CD8-positive, alpha-beta T cell (primary cell): ENCODE measurements at regions of chr17 and their contacts with region 1.

Region 1: DNA sequence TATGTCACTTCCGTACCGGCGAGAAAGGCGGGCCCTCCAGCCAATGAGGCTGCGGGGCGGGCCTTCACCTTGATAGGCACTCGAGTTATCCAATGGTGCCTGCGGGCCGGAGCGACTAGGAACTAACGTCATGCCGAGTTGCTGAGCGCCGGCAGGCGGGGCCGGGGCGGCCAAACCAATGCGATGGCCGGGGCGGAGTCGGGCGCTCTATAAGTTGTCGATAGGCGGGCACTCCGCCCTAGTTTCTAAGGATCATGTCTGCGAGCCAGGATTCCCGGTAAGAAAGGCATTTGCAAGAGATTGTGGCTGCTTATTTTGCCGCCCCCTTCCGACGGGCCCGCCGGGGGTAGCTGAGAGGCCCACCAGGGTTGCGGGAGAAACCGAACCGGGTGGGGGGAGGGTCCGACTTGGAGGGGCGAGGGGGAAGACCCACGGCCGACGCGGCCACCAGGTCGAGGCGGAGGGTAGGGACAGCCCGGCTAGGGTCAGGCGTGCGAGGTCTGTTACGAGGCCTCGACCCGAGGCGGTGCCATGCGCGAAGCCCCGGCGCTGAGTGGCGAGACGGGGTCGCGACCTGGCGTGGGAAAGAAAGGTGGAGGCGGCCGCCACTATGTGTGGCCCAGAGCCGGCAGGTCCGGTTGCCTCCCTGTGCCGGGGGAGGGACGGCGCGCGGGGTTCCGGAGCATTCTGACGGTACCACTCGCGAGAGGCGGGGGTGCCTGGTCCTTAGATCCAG is 6.7 kb upstream of the CD68 start:
- DNase-seq: peak in 8 of 9 experiments; percentile 99 to 100 (median 100)
- ATAC-seq: peak; percentile 83
- H3K4me3 ChIP-seq: peak overlapping the region; percentile 97 to 100
- H3K4me3 Mint-ChIP-seq: peak overlapping the region; percentile 99
- H3K27ac ChIP-seq: peak overlapping the region; percentile 98 to 99
- H3K27ac Mint-ChIP-seq: peak overlapping the region; percentile 96
- H3K4me1 ChIP-seq: peaks cover 28% of the 10 kb centered on the region
- H3K4me1 Mint-ChIP-seq: peaks cover 48% of the 10 kb centered on the region
- H3K27me3 ChIP-seq: no peaks in the 10 kb centered on the region
- H3K27me3 Mint-ChIP-seq: no peaks in the 10 kb centered on the region
- CTCF ChIP-seq: no peak

Region 2: GRCh38 chr17:7214300-7215135 is 358.2 kb before region 1 on chr17:
- CTCF ChIA-PET with region 1: no interaction called
- POLR2A ChIA-PET with region 1: no interaction called
- intact Hi-C with region 1: loop called in 1 of 2 experiments (anchors 2 kb)
- DNase-seq: peak; percentile 97 to 100 (median 98)
- ATAC-seq: peak; percentile 75
- H3K4me3 ChIP-seq: peak overlapping the region; percentile 36 to 56
- H3K4me3 Mint-ChIP-seq: peak overlapping the region; percentile 90
- H3K27ac ChIP-seq: peak overlapping the region; percentile 80 to 95
- H3K27ac Mint-ChIP-seq: peak overlapping the region; percentile 95
- H3K4me1 ChIP-seq: peaks cover 51% of the 10 kb centered on the region
- H3K4me1 Mint-ChIP-seq: peaks cover 61% of the 10 kb centered on the region
- H3K27me3 ChIP-seq: no peaks in the 10 kb centered on the region
- H3K27me3 Mint-ChIP-seq: no peaks in the 10 kb centered on the region
- CTCF ChIP-seq: peak; percentile 52

Region 3: GRCh38 chr17:7314719-7315569 is 257.8 kb before region 1 on chr17 and contains the start of gene GPS2:
- CTCF ChIA-PET with region 1: no interaction called
- POLR2A ChIA-PET with region 1: no interaction called
- intact Hi-C with region 1: loop called in 1 of 2 experiments (anchors 2 kb)
- DNase-seq: peak; percentile 87 to 97 (median 94)
- ATAC-seq: peak; percentile 78
- H3K4me3 ChIP-seq: peak within 1 kb of the TSS; percentile 77 to 82
- H3K4me3 Mint-ChIP-seq: peak within 1 kb of the TSS; percentile 92
- H3K27ac ChIP-seq: peak within 1 kb of the TSS; percentile 81 to 97
- H3K27ac Mint-ChIP-seq: peak within 1 kb of the TSS; percentile 96
- H3K4me1 ChIP-seq: peaks cover 50% of the 10 kb centered on the region
- H3K4me1 Mint-ChIP-seq: peaks cover 51% of the 10 kb centered on the region
- H3K27me3 ChIP-seq: no peaks in the 10 kb centered on the region
- H3K27me3 Mint-ChIP-seq: no peaks in the 10 kb centered on the region
- CTCF ChIP-seq: no peak
- total RNA-seq, gene GPS2: 128 to 132 TPM

Region 4: DNA sequence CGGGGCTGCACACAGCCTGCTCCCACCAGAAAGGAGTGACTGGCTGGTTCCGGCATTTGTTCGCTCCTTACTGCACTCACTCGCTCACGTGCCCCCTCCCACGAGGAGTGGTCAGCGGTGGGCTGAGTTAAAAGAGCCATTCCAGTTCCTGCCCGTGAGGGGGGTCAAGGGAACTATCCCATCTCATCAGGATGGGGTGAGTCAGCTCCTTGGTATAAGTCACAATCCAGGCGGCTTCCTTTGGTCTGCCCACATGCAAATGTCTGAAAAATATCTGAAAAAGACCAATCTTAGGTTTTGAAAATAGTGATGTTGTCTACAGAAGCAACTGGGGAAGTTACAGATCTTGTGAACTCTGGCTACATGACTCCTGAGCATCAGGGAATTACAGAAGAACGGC is 33.9 kb before region 1 on chr17:
- CTCF ChIA-PET with region 1: no interaction called
- POLR2A ChIA-PET with region 1: no interaction called
- intact Hi-C with region 1: no loop called
- DNase-seq: no peak
- ATAC-seq: no peak
- H3K4me3 ChIP-seq: no peak overlapping the region
- H3K4me3 Mint-ChIP-seq: no peak overlapping the region
- H3K27ac ChIP-seq: no peak overlapping the region
- H3K27ac Mint-ChIP-seq: no peak overlapping the region
- H3K4me1 ChIP-seq: no peaks in the 10 kb centered on the region
- H3K4me1 Mint-ChIP-seq: no peaks in the 10 kb centered on the region
- H3K27me3 ChIP-seq: peaks cover 0 to 2% of the 10 kb centered on the region in 2 experiments
- H3K27me3 Mint-ChIP-seq: peaks cover 3% of the 10 kb centered on the region
- CTCF ChIP-seq: no peak

Region 5: DNA sequence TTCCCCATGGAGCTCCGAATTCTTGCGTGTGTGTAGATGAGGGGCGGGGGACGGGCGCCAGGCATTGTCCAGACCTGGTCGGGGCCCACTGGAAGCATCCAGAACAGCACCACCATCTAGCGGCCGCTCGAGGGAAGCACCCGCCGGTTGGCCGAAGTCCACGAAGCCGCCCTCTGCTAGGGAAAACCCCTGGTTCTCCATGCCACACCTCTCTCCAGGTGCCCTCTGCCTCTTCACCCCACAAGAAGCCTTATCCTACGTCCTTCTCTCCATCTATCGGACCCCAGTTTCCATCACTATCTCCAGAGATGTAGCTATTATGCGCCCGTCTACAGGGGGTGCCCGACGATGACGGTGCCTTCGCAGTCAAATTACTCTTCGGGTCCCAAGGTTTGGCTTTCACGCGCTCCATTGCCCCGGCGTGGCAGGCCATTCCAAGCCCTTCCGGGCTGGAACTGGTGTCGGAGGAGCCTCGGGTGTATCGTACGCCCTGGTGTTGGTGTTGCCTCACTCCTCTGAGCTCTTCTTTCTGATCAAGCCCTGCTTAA is 11.7 kb before region 1 on chr17:
- CTCF ChIA-PET with region 1: interaction called, 30 read pairs
- POLR2A ChIA-PET with region 1: interaction called, 18 read pairs
- intact Hi-C with region 1: loop called (anchors 1 kb)
- DNase-seq: peak; percentile 67 to 89 (median 81)
- ATAC-seq: peak; percentile 68
- H3K4me3 ChIP-seq: peak overlapping the region; percentile 50 to 95
- H3K4me3 Mint-ChIP-seq: peak overlapping the region; percentile 94
- H3K27ac ChIP-seq: peak overlapping the region; percentile 91 to 97
- H3K27ac Mint-ChIP-seq: peak overlapping the region; percentile 99
- H3K4me1 ChIP-seq: peaks cover 49% of the 10 kb centered on the region
- H3K4me1 Mint-ChIP-seq: peaks cover 50% of the 10 kb centered on the region
- H3K27me3 ChIP-seq: no peaks in the 10 kb centered on the region
- H3K27me3 Mint-ChIP-seq: no peaks in the 10 kb centered on the region
- CTCF ChIP-seq: peak; percentile 85

Region 6: DNA sequence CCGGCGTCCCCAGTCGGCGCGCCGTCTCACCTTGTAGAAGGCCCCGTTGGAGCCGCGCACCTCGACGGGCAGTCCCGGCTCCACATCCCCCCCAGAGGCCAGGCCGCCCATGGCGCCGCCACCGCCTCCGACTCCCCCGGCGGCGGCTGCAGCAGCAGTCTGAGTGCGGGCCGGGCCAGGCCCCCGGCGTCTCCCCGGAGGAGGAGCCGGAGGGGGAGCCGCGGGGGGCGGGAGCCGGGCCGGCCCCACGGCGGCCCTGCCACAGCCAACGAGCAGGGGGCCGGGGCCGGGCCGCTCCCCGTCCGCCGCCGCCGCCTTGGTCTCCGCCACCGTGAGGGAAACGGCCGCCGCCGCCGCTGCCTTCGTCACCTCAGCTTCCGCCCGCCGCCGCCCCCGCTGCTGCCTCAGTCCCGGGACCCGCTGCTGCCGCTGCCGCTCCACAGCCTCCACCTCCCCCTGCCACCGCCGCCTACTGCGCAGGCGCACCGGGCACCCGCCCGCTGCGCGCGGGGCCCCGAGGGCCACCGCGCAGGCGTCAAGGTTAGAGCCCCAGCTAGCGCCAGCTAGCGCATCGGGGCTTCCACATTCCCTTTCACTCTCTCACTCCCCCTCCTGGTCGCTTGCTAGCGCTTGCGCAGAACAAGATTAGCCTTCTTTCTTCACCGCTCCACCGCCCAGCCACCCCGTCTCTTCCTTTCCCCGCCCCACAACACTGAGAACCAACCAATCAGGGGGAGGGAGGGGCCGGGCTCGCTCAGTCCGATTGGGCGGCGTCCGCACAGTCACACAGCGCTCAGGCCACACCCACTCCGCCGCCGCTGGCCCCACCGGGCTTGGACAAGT is 41.9 kb after region 1 on chr17 and contains the start of gene FXR2:
- CTCF ChIA-PET with region 1: interaction called, 4 read pairs
- POLR2A ChIA-PET with region 1: interaction called, 6 read pairs
- intact Hi-C with region 1: loop called (anchors 1 kb)
- DNase-seq: peak; percentile 96 to 100 (median 98)
- ATAC-seq: peak; percentile 87
- H3K4me3 ChIP-seq: peak within 1 kb of the TSS; percentile 78 to 86
- H3K4me3 Mint-ChIP-seq: peak within 1 kb of the TSS; percentile 89
- H3K27ac ChIP-seq: peak within 1 kb of the TSS; percentile 70 to 89
- H3K27ac Mint-ChIP-seq: peak within 1 kb of the TSS; percentile 96
- H3K4me1 ChIP-seq: peaks cover 30% of the 10 kb centered on the region
- H3K4me1 Mint-ChIP-seq: peaks cover 38% of the 10 kb centered on the region
- H3K27me3 ChIP-seq: no peaks in the 10 kb centered on the region
- H3K27me3 Mint-ChIP-seq: no peaks in the 10 kb centered on the region
- CTCF ChIP-seq: peak; percentile 39
- total RNA-seq, gene FXR2: 18.8 to 21.7 TPM

Region 7: DNA sequence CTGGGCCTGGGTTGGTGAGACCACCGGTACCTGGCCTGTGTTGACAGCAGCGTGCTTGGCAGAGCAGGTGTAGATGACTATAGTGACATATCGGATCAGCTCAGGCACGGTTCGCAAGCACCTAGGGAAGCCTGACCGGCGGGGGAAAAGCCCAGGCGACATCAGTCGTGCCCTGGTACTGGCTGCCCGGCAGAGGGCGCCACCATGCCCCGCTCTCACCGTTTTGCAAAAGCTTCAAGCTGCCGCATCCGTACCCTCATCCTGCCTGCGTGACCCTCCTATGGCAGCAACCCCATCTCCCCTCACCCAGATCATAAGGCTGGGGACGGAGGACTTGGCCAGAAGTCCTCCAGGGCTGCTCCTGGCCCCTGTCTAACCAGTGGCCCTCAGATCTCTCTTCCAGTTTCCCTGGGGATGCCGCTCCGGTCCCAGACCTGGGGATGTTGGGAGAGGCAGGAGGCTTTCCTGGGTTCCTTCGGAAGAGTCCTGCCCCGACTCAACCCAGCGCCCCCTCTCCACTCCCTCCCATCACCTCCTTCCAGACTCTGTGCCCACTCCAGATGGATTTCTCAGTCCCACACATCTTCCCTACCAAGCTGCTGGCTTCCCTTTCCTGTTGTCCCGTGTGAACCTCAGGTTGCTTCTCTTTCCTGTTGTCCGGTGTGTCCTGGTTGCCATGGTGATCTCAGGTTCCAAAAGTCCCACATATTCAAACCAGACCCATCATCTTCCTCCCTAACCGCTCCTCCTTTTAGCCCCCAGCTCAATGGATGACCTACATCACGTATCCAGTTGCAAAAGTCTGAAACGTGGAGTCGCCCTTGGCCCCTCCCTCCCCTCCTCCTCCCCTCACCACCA is 501.1 kb after region 1 on chr17:
- CTCF ChIA-PET with region 1: no interaction called
- POLR2A ChIA-PET with region 1: no interaction called
- intact Hi-C with region 1: no loop called
- DNase-seq: peak; percentile 74 to 93 (median 88)
- ATAC-seq: peak; percentile 96
- H3K4me3 ChIP-seq: peak overlapping the region in 1 of 2 experiments; percentile 45
- H3K4me3 Mint-ChIP-seq: peak overlapping the region; percentile 84
- H3K27ac ChIP-seq: no peak overlapping the region
- H3K27ac Mint-ChIP-seq: peak overlapping the region; percentile 37
- H3K4me1 ChIP-seq: peaks cover 22% of the 10 kb centered on the region
- H3K4me1 Mint-ChIP-seq: peaks cover 22% of the 10 kb centered on the region
- H3K27me3 ChIP-seq: peaks cover 11 to 22% of the 10 kb centered on the region in 2 experiments
- H3K27me3 Mint-ChIP-seq: peaks cover 36% of the 10 kb centered on the region
- CTCF ChIP-seq: peak; percentile 89